HepG2 (cell line): ENCODE measurements at regions of chr3 and their contacts with region 1.

Region 1: GRCh38 chr3:171049861-171050444 is 23.4 kb upstream of the SLC2A2 start:
- DNase-seq: peak; percentile 71
- ATAC-seq: peak; percentile 54
- H3K4me3 ChIP-seq: no peak overlapping the region
- H3K27ac ChIP-seq: no peak overlapping the region
- H3K4me1 ChIP-seq: peaks cover 71% of the 10 kb centered on the region
- H3K27me3 ChIP-seq: no peaks in the 10 kb centered on the region
- CTCF ChIP-seq: peak; percentile 81
- EP300 ChIP-seq: no peak
- POLR2A ChIP-seq: no peak
- RAD21 ChIP-seq: peak; percentile 70

Region 2: GRCh38 chr3:170914690-170915089 is 135.3 kb before region 1 on chr3:
- CTCF ChIA-PET with region 1: no interaction called
- POLR2A ChIA-PET with region 1: no interaction called
- in situ Hi-C with region 1: no loop called
- intact Hi-C with region 1: no loop called
- DNase-seq: no peak
- ATAC-seq: no peak
- H3K4me3 ChIP-seq: no peak overlapping the region
- H3K27ac ChIP-seq: no peak overlapping the region
- H3K4me1 ChIP-seq: peaks cover 2% of the 10 kb centered on the region; the same call in 1 of the 2 replicates
- H3K27me3 ChIP-seq: 0 out of 5 replicates have a peak, but pooled peaks cover 0 to 4% of the 10 kb centered on the region in 2 experiments
- CTCF ChIP-seq: no peak
- EP300 ChIP-seq: no peak
- POLR2A ChIP-seq: no peak
- RAD21 ChIP-seq: no peak

Region 3: GRCh38 chr3:170961616-170962400 is 88.1 kb before region 1 on chr3:
- CTCF ChIA-PET with region 1: interaction called, 19 read pairs
- POLR2A ChIA-PET with region 1: interaction called, 9 read pairs
- in situ Hi-C with region 1: loop called (anchors 5 kb)
- intact Hi-C with region 1: loop called (anchors 1 kb)
- DNase-seq: peak; percentile 76
- ATAC-seq: peak; percentile 91
- H3K4me3 ChIP-seq: peak overlapping the region in 1 of 3 experiments; percentile 20; a peak in 1 of 6 replicates
- H3K27ac ChIP-seq: peak overlapping the region; percentile 46
- H3K4me1 ChIP-seq: peaks cover 51% of the 10 kb centered on the region
- H3K27me3 ChIP-seq: no peaks in the 10 kb centered on the region
- CTCF ChIP-seq: peak; percentile 80
- EP300 ChIP-seq: no peak
- POLR2A ChIP-seq: no peak
- RAD21 ChIP-seq: peak; percentile 82; the same call in 1 of the 2 replicates

Region 4: GRCh38 chr3:171028025-171028778 is 21.8 kb before region 1 on chr3:
- CTCF ChIA-PET with region 1: no interaction called
- POLR2A ChIA-PET with region 1: interaction called, 18 read pairs
- in situ Hi-C with region 1: no loop called
- intact Hi-C with region 1: loop called (anchors 1 kb)
- DNase-seq: peak; percentile 28
- ATAC-seq: peak; percentile 81
- H3K4me3 ChIP-seq: peak overlapping the region; percentile 5 to 58 (median 32); a peak in 5 of 6 replicates
- H3K27ac ChIP-seq: peak overlapping the region; percentile 65
- H3K4me1 ChIP-seq: peaks cover 63% of the 10 kb centered on the region
- H3K27me3 ChIP-seq: no peaks in the 10 kb centered on the region
- CTCF ChIP-seq: no peak
- EP300 ChIP-seq: no peak
- POLR2A ChIP-seq: 0 out of 4 replicates have a peak, but pooled peaks of 1 of the 2 experiments have one; percentile 25
- RAD21 ChIP-seq: no peak

Region 5: DNA sequence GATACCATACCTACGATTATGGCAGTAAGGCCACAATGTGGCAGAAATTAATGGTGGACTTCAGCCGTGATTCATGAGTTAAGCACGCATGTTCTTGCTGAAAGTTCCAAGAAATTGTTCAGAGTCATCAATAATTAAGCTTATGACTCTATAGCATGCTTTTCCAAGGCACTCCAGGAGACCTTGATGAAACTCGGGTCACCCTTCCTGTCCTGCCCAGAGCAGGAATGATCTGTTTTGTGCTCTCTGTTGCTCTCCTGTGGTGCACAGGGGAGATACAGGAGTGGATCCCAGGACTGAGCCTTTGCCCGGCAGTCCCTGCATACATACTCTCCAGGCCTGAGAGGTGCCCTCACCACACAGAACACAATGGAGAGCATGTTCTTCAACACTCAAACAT is 118.1 kb after region 1 on chr3:
- CTCF ChIA-PET with region 1: interaction called, 5 read pairs
- POLR2A ChIA-PET with region 1: interaction called, 4 read pairs
- in situ Hi-C with region 1: loop called (anchors 5 kb)
- intact Hi-C with region 1: loop called (anchors 1 kb)
- DNase-seq: peak; percentile 76
- ATAC-seq: peak; percentile 99
- H3K4me3 ChIP-seq: no peak overlapping the region
- H3K27ac ChIP-seq: no peak overlapping the region
- H3K4me1 ChIP-seq: peaks cover 43% of the 10 kb centered on the region
- H3K27me3 ChIP-seq: no peaks in the 10 kb centered on the region; a peak in 1 of 5 replicates
- CTCF ChIP-seq: peak; percentile 85
- EP300 ChIP-seq: no peak
- POLR2A ChIP-seq: no peak
- RAD21 ChIP-seq: peak; percentile 74

Region 6: DNA sequence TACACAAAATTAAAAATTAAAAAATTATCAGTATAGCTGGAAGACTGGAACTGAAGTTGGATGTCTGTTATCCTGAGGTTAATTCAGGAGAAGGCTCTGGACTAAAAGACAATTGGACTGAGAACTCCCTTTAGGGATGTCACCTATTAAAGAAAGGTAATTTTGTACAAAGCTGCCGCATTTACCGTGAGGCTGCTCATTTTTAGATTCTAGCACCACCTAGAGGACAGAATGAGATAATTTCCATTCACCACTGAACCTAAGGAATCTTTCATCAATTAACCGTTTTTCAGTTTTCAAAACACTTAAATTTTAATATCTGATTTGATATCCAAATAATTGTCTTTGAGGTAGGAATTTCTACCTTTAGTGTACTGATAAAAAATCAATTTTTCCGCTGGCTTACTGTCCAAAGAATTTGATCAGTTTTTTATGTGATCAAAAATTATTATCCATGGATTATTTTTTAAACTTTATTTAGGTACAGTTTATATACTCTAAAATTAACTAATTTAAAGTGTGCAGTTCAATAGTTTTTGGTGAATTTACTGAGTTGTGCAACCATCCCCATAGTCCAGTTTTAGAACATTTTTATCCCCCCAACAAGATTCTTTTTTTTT is 517.0 kb after region 1 on chr3:
- CTCF ChIA-PET with region 1: interaction called, 6 read pairs
- POLR2A ChIA-PET with region 1: no interaction called
- in situ Hi-C with region 1: no loop called
- intact Hi-C with region 1: loop called (anchors 2 kb)
- DNase-seq: peak; percentile 41
- ATAC-seq: peak; percentile 53; the same call in 2 of the 3 replicates
- H3K4me3 ChIP-seq: no peak overlapping the region
- H3K27ac ChIP-seq: no peak overlapping the region
- H3K4me1 ChIP-seq: peaks cover 15% of the 10 kb centered on the region
- H3K27me3 ChIP-seq: no peaks in the 10 kb centered on the region
- CTCF ChIP-seq: peak; percentile 75
- EP300 ChIP-seq: no peak
- POLR2A ChIP-seq: no peak
- RAD21 ChIP-seq: peak; percentile 68